ENCODE measurements at regions of chr4 and their contacts with region 1.

Region 1: GRCh38 chr4:87973283-87974169 is 2.0 kb upstream of the SPP1 start:
- DNase-seq: no peak
- ATAC-seq: peak; percentile 52 to 65
- H3K4me3 ChIP-seq: peak overlapping the region in 1 of 4 donors; percentile 18
- H3K27ac ChIP-seq: no peak overlapping the region
- H3K4me1 ChIP-seq: peaks cover 0 to 3% of the 10 kb centered on the region in 2 donors
- H3K27me3 ChIP-seq: no peaks in the 10 kb centered on the region
- CTCF ChIP-seq: peak; percentile 28 to 77 (median 56)
- POLR2A ChIP-seq: no peak

Region 2: DNA sequence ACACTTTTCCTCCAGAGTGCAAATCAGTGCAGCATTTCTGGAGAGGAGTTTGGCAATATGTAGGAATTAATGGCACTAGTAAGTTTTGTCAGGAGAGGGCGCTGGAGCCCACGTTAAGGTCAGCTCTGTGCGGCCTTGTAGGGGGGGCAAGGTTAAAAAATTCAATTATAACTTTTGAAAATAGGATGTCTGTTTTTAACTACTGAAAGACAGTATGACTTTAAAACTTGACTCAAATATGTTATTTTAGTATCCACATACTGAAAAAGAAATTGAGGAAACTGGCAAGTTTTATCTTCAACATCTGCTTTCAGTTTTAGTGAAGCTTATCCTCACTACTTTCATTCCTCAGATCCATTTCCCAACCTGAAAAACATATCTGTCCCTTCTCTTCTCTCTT is 619.9 kb before region 1 on chr4:
- in situ Hi-C with region 1: no loop called
- intact Hi-C with region 1: loop called (anchors 5 kb)
- DNase-seq: peak in 1 of 2 donors; percentile 38
- ATAC-seq: peak; percentile 42 to 94
- H3K4me3 ChIP-seq: no peak overlapping the region
- H3K27ac ChIP-seq: peak overlapping the region; percentile 6 to 50 (median 32)
- H3K4me1 ChIP-seq: peaks cover 0 to 4% of the 10 kb centered on the region in 2 donors
- H3K27me3 ChIP-seq: no peaks in the 10 kb centered on the region
- CTCF ChIP-seq: peak; percentile 42 to 59 (median 56)
- POLR2A ChIP-seq: no peak

Region 3: GRCh38 chr4:88115587-88115986 is 142.1 kb after region 1 on chr4:
- in situ Hi-C with region 1: no loop called
- intact Hi-C with region 1: no loop called
- DNase-seq: no peak
- ATAC-seq: no peak
- H3K4me3 ChIP-seq: no peak overlapping the region
- H3K27ac ChIP-seq: no peak overlapping the region
- H3K4me1 ChIP-seq: no peaks in the 10 kb centered on the region
- H3K27me3 ChIP-seq: no peaks in the 10 kb centered on the region
- CTCF ChIP-seq: no peak
- POLR2A ChIP-seq: no peak